ENCODE measurements at regions of chr19 and their contacts with region 1.

Region 1: GRCh38 chr19:1406774-1407499 is 449 bp upstream of the DAZAP1 start:
- DNase-seq: peak; percentile 99 to 100 (median 99)
- ATAC-seq: peak; percentile 89
- H3K4me3 ChIP-seq: peak overlapping the region in 1 of 2 donors; percentile 19
- H3K27ac ChIP-seq: peak overlapping the region; percentile 85 to 95 (median 94)
- H3K4me1 ChIP-seq: peaks cover 60% of the 10 kb centered on the region
- H3K27me3 ChIP-seq: no peaks in the 10 kb centered on the region
- CTCF ChIP-seq: peak in 6 of 7 experiments; percentile 15 to 65 (median 45)
- POLR2A ChIP-seq: peak in 2 of 3 donors; percentile 37 to 45

Region 2: DNA sequence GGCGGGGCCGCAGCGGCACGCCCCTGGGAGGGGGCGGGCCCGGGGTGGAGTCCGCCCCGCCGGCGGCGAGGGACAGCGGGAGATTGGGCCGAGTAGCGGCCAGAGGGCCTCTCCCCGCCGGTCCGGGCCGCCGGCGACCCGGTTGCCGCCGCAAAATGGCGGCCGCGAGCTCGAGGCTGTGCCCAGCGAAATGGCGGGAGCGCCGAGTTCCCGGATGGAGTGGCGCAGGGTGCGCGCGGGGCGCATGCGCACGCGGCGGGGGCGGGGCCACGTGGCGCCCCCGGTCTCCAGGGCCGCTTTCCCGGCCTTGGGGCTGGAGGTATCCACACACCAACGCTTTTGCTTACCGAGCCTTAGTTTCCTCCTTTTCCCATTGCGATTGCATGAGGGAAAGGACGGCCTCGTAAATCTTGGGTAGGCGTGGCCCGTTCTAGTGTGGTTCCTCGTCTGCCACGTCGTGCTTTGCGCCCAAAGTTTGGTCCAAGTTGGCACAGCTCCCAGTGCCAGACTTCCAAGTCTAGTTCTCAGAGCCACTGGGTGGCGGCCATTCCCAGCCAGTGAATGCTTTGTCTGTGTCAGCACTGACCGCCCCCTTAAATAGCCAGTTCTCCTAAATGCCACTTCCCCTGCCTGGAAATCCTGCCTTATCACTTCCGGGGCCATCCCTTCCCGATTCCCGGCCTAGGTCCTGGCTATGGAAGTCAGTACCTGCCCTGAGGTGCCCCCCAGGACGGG is 137.3 kb before region 1 on chr19:
- intact Hi-C with region 1: loop called (anchors 5 kb)
- DNase-seq: peak; percentile 88 to 92 (median 90)
- ATAC-seq: peak; percentile 65
- H3K4me3 ChIP-seq: peak overlapping the region; percentile 34 to 79
- H3K27ac ChIP-seq: peak overlapping the region; percentile 95 to 100 (median 98)
- H3K4me1 ChIP-seq: peaks cover 89% of the 10 kb centered on the region
- H3K27me3 ChIP-seq: no peaks in the 10 kb centered on the region
- CTCF ChIP-seq: peak in 2 of 7 experiments; percentile 11 to 16
- POLR2A ChIP-seq: peak in 2 of 3 donors; percentile 0 to 36